IMR-90 (cell line): ENCODE measurements at regions of chr3 and their contacts with region 1.

Region 1: DNA sequence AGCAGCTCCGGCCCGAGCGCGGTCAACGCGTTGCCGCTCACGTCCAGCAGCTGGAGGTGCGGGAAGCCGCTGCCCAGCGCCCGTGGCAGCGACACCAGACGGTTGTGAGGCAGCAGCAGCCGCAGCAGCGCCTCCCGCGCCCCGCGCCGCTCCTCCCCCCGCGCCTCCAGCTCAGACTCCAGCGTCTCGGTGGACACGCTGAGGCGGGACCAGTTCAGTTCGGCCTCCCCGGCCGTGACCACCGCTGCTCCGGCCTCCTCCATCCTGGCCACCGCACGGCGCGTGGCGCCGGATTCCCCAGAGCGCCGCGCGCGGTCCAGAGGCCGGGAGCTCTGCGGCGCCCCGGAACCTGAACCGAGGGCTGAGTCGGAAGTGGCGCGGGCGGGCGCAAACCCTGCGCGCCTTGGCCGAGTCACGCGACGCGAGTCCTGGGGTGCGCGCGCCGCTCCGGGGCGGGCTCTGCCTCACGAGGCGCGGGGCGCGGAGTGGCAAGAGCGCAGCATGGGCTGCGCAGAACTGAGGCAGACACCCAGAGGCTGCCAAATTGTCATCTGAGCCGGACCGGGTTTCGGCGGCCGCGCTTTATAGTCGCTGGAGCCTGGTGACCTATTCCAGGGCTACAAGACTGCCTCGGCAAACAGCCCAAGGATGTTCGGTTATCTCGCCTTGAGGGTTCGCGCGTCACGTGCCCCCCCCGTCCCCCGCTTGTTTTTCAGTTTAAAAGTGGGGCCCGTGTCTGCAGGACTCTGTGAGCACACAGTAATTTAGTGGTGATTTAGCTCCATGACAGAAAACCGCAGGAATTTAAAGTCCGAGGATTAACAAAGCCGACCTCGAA is at the start of gene LRRC58:
- DNase-seq: peak; percentile 91
- ATAC-seq: peak; percentile 95
- H3K4me3 ChIP-seq: peak within 1 kb of the TSS; percentile 80
- H3K27ac ChIP-seq: peak within 1 kb of the TSS; percentile 86
- H3K4me1 ChIP-seq: peaks cover 5% of the 10 kb centered on the region
- H3K27me3 ChIP-seq: peaks cover 5% of the 10 kb centered on the region; the same call in 1 of the 2 replicates
- CTCF ChIP-seq: peak; percentile 30
- POLR2A ChIP-seq: peak; percentile 77
- RAD21 ChIP-seq: no peak
- total RNA-seq, gene LRRC58: 13.4 and 21.7 TPM in 2 replicates

Region 2: GRCh38 chr3:120102674-120103073 is 246.5 kb before region 1 on chr3:
- CTCF ChIA-PET with region 1: no interaction called
- POLR2A ChIA-PET with region 1: no interaction called
- dilution Hi-C with region 1: no loop called
- in situ Hi-C with region 1: no loop called
- intact Hi-C with region 1: no loop called
- DNase-seq: no peak
- ATAC-seq: no peak
- H3K4me3 ChIP-seq: no peak overlapping the region
- H3K27ac ChIP-seq: no peak overlapping the region
- H3K4me1 ChIP-seq: peaks cover 5% of the 10 kb centered on the region
- H3K27me3 ChIP-seq: no peaks in the 10 kb centered on the region
- CTCF ChIP-seq: no peak
- POLR2A ChIP-seq: no peak
- RAD21 ChIP-seq: no peak

Region 3: GRCh38 chr3:120129718-120130513 is 219.3 kb before region 1 on chr3:
- CTCF ChIA-PET with region 1: no interaction called
- POLR2A ChIA-PET with region 1: no interaction called
- dilution Hi-C with region 1: no loop called
- in situ Hi-C with region 1: no loop called
- intact Hi-C with region 1: no loop called
- DNase-seq: peak; percentile 57
- ATAC-seq: peak; percentile 48; the same call in 1 of the 2 replicates
- H3K4me3 ChIP-seq: no peak overlapping the region
- H3K27ac ChIP-seq: no peak overlapping the region
- H3K4me1 ChIP-seq: no peaks in the 10 kb centered on the region
- H3K27me3 ChIP-seq: no peaks in the 10 kb centered on the region
- CTCF ChIP-seq: no peak
- POLR2A ChIP-seq: no peak
- RAD21 ChIP-seq: no peak

Region 4: DNA sequence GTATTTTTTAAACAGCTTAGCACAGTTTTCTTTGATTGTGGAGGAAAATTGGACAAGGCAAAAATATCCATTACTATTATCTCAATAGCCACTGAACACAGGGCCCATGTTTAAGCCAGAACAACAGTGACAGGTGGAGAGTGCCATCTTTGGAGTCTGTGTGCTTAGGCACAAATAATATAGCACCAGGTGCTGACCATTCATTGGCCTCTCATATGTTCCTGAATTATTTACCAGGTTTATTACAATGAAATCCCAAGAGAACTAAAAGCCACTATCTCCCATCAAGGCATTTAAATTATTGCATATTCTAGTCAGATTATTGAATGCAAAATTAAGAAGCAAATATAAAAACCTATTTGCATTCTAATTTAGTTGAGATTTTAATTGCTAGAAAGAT is 103.8 kb before region 1 on chr3:
- CTCF ChIA-PET with region 1: no interaction called
- POLR2A ChIA-PET with region 1: no interaction called
- dilution Hi-C with region 1: no loop called
- in situ Hi-C with region 1: no loop called
- intact Hi-C with region 1: loop called (anchors 5 kb)
- DNase-seq: no peak
- ATAC-seq: no peak
- H3K4me3 ChIP-seq: no peak overlapping the region
- H3K27ac ChIP-seq: no peak overlapping the region
- H3K4me1 ChIP-seq: no peaks in the 10 kb centered on the region; the same call in 1 of the 2 replicates
- H3K27me3 ChIP-seq: peaks cover 12% of the 10 kb centered on the region
- CTCF ChIP-seq: no peak
- POLR2A ChIP-seq: no peak
- RAD21 ChIP-seq: no peak

Region 5: DNA sequence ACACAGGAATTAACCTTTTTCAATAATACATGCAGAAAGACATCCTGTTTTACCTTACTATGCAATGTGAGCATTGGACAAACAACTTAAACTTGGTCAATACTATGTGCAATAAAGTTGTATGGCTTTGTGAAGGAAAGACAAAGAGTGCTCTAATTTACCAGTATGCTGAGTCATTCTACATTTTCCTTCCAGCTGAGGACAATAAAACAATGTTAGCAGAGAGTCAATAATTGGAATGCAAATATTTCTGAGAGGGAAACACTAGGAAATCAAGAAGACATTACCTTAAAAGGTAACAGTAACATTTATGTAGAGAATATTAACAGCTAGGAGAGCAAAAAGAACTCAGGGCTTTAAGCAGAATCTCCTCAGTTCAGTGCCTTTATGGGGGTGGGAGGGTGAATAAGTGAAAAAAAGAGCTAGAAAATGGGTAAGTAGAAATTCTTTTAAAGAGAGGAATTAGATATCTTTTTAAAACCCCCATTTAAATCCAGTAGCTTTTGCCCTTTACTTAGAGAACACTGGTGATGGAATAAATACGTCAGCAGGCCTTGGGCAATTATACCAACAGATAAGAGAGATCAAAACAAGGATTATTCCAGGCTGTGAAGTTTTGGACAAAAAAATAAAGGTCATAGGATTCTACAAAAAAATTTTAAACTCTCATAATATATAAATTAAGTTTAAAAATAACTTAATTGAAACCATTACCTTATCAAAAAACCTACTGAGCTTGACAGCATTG is 344.4 kb after region 1 on chr3:
- CTCF ChIA-PET with region 1: no interaction called
- POLR2A ChIA-PET with region 1: no interaction called
- dilution Hi-C with region 1: no loop called
- in situ Hi-C with region 1: no loop called
- intact Hi-C with region 1: no loop called
- DNase-seq: peak; percentile 55
- ATAC-seq: peak; percentile 82
- H3K4me3 ChIP-seq: no peak overlapping the region
- H3K27ac ChIP-seq: peak overlapping the region; percentile 75; the same call in 1 of the 2 replicates
- H3K4me1 ChIP-seq: peaks cover 9% of the 10 kb centered on the region
- H3K27me3 ChIP-seq: no peaks in the 10 kb centered on the region
- CTCF ChIP-seq: no peak
- POLR2A ChIP-seq: no peak
- RAD21 ChIP-seq: no peak